ENCODE measurements at regions of chr5 and their contacts with region 1.

Region 1: DNA sequence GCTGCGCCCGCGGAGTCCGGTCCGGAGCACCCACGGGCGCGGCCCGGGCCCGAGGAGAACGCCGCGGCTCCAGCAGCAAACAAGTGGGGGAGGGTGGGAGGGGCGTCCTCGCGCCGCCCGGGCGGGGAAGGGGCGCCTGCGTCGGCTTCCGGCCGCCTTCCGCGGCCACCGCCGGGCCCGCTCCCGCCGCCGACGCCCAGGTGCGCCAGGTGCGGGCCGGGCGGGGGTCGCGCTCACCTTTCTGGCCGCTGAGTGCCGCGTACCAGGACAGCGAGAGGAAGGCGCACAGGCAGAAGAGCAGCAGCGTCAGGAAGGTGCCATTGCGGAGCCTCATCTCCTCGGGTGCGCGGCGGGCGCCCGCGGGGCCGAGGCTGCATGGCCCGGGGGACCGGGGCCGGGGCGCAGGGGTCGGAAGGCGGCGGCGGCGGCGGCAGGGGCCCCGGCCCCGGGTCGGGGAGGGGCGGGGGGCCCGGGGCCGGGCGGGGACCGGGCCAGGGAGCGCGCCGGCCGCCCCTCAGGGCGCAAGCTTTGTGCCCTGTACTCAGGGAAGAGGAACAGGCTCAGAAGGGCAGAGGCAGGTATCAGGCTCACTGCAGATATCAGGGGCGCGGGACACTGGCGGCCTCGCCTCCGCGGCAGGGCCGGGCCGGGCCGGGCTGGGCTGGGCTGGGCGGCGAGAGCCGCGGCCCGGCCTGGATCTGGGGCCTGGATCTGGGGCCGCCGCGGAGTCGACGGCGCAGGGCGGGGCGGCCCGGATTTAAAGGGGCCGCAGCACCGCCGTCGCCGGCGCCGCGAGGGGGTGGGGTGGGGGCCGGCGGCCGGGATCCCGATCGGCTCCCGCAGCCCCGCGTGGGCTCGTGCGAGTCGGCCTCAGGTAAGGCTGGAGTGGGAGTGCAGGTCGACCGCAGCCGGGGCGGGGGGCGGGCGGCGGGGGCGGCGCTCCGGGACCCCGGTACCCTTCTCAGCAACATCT is at the start of gene MGAT4B:
- DNase-seq: peak; percentile 75
- ATAC-seq: peak; percentile 83
- H3K4me3 Mint-ChIP-seq: peak within 1 kb of the TSS; percentile 85
- H3K27ac Mint-ChIP-seq: peak within 1 kb of the TSS; percentile 79
- H3K4me1 Mint-ChIP-seq: peaks cover 27% of the 10 kb centered on the region
- H3K27me3 Mint-ChIP-seq: no peaks in the 10 kb centered on the region
- total RNA-seq, gene MGAT4B: 85.9 to 103 TPM

Region 2: DNA sequence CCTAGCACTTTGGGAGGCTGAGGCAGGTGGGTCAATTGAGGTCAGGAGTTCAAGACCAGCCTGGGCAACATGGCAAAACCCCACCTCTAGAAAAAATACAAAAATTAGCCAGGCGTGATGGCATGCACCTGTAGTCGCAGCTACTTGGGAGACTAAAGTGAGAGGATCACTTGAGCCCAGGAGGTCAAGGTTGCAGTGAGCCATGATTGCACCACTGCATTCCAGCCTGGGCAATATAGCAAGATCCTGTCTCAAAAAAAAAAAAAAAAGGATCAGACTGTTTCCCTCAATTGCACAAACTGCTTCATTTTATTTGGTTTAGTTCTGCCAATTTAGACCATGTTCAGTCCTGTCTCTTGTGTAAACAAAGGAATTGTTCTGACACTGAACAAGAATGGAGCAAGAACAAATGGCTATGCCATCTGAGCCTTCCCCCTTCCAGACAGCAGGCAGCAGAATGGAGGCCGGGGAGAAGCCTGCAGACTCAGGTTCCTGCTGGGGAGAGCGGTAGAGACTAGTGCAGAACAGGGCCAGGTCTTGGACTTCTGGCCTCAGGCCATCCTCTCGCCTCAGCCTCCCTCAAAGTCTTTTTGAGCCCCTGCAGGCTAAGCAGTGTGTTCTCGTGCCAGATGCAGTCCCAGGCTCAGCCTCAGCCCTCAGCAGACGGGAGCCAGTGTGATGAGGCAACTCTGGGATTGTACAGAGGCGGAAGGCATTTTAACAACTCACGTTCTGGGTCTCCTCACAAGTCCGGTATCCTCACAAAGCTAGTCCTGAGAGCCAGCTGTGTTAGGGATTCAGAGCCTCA is 201.3 kb before region 1 on chr5:
- CTCF ChIA-PET with region 1: no interaction called
- POLR2A ChIA-PET with region 1: no interaction called
- DNase-seq: no peak
- ATAC-seq: no peak
- H3K4me3 Mint-ChIP-seq: no peak overlapping the region
- H3K27ac Mint-ChIP-seq: peak overlapping the region; percentile 43
- H3K4me1 Mint-ChIP-seq: peaks cover 33% of the 10 kb centered on the region
- H3K27me3 Mint-ChIP-seq: no peaks in the 10 kb centered on the region

Region 3: GRCh38 chr5:179616002-179616594 is 190.4 kb before region 1 on chr5:
- CTCF ChIA-PET with region 1: no interaction called
- POLR2A ChIA-PET with region 1: no interaction called
- DNase-seq: no peak
- ATAC-seq: no peak
- H3K4me3 Mint-ChIP-seq: no peak overlapping the region
- H3K27ac Mint-ChIP-seq: peak overlapping the region; percentile 51
- H3K4me1 Mint-ChIP-seq: peaks cover 65% of the 10 kb centered on the region
- H3K27me3 Mint-ChIP-seq: no peaks in the 10 kb centered on the region

Region 4: GRCh38 chr5:179821581-179822432 is 15.3 kb after region 1 on chr5:
- CTCF ChIA-PET with region 1: interaction called, 18 read pairs
- POLR2A ChIA-PET with region 1: interaction called, 29 read pairs
- DNase-seq: peak; percentile 91
- ATAC-seq: peak; percentile 73
- H3K4me3 Mint-ChIP-seq: peak overlapping the region; percentile 91
- H3K27ac Mint-ChIP-seq: peak overlapping the region; percentile 97
- H3K4me1 Mint-ChIP-seq: peaks cover 56% of the 10 kb centered on the region
- H3K27me3 Mint-ChIP-seq: no peaks in the 10 kb centered on the region

Region 5: GRCh38 chr5:179858586-179859427 is 52.3 kb after region 1 on chr5 and contains the start of gene MRNIP:
- CTCF ChIA-PET with region 1: interaction called, 15 read pairs
- POLR2A ChIA-PET with region 1: no interaction called
- DNase-seq: peak; percentile 93
- ATAC-seq: peak; percentile 99
- H3K4me3 Mint-ChIP-seq: peak within 1 kb of the TSS; percentile 94
- H3K27ac Mint-ChIP-seq: peak within 1 kb of the TSS; percentile 56
- H3K4me1 Mint-ChIP-seq: peaks cover 17% of the 10 kb centered on the region
- H3K27me3 Mint-ChIP-seq: no peaks in the 10 kb centered on the region
- total RNA-seq, gene MRNIP: 16.1 to 17.1 TPM

Region 6: GRCh38 chr5:179907570-179908324 is 101.2 kb after region 1 on chr5 and contains the start of gene TBC1D9B:
- CTCF ChIA-PET with region 1: interaction called, 13 read pairs
- POLR2A ChIA-PET with region 1: interaction called, 3 read pairs
- DNase-seq: peak; percentile 63
- ATAC-seq: peak; percentile 93
- H3K4me3 Mint-ChIP-seq: peak within 1 kb of the TSS; percentile 85
- H3K27ac Mint-ChIP-seq: peak within 1 kb of the TSS; percentile 80
- H3K4me1 Mint-ChIP-seq: peaks cover 17% of the 10 kb centered on the region
- H3K27me3 Mint-ChIP-seq: no peaks in the 10 kb centered on the region
- total RNA-seq, gene TBC1D9B: 70.5 to 72.7 TPM